ENCODE measurements at regions of chr1 and their contacts with region 1.

Region 1: GRCh38 chr1:114282751-114283403 is 129.2 kb upstream of the SYT6 start:
- DNase-seq: peak; percentile 67 to 91 (median 84)
- ATAC-seq: peak; percentile 99
- H3K4me3 ChIP-seq: no peak overlapping the region
- H3K4me3 Mint-ChIP-seq: no peak overlapping the region
- H3K27ac ChIP-seq: no peak overlapping the region
- H3K27ac Mint-ChIP-seq: no peak overlapping the region
- H3K4me1 ChIP-seq: no peaks in the 10 kb centered on the region
- H3K4me1 Mint-ChIP-seq: peaks cover 8% of the 10 kb centered on the region
- H3K27me3 ChIP-seq: no peaks in the 10 kb centered on the region
- H3K27me3 Mint-ChIP-seq: no peaks in the 10 kb centered on the region
- CTCF ChIP-seq: peak; percentile 80

Region 2: GRCh38 chr1:113140588-113141446 is 1142.1 kb before region 1 on chr1:
- CTCF ChIA-PET with region 1: no interaction called
- POLR2A ChIA-PET with region 1: no interaction called
- intact Hi-C with region 1: loop called in 1 of 2 experiments (anchors 10 kb)
- DNase-seq: peak; percentile 2 to 67 (median 43)
- ATAC-seq: peak; percentile 73
- H3K4me3 ChIP-seq: no peak overlapping the region
- H3K4me3 Mint-ChIP-seq: no peak overlapping the region
- H3K27ac ChIP-seq: no peak overlapping the region
- H3K27ac Mint-ChIP-seq: no peak overlapping the region
- H3K4me1 ChIP-seq: no peaks in the 10 kb centered on the region
- H3K4me1 Mint-ChIP-seq: peaks cover 8% of the 10 kb centered on the region
- H3K27me3 ChIP-seq: no peaks in the 10 kb centered on the region
- H3K27me3 Mint-ChIP-seq: no peaks in the 10 kb centered on the region
- CTCF ChIP-seq: peak; percentile 70

Region 3: GRCh38 chr1:113978863-113979702 is 303.8 kb before region 1 on chr1 and contains the start of gene OLFML3:
- CTCF ChIA-PET with region 1: interaction called, 16 read pairs
- POLR2A ChIA-PET with region 1: interaction called, 4 read pairs
- intact Hi-C with region 1: loop called (anchors 1 to 2 kb)
- DNase-seq: peak in 6 of 9 experiments; percentile 8 to 70 (median 48)
- ATAC-seq: peak; percentile 26
- H3K4me3 ChIP-seq: no peak within 1 kb of the TSS
- H3K4me3 Mint-ChIP-seq: no peak within 1 kb of the TSS
- H3K27ac ChIP-seq: no peak within 1 kb of the TSS
- H3K27ac Mint-ChIP-seq: peak within 1 kb of the TSS; percentile 55
- H3K4me1 ChIP-seq: peaks cover 18% of the 10 kb centered on the region
- H3K4me1 Mint-ChIP-seq: peaks cover 41% of the 10 kb centered on the region
- H3K27me3 ChIP-seq: no peaks in the 10 kb centered on the region
- H3K27me3 Mint-ChIP-seq: no peaks in the 10 kb centered on the region
- CTCF ChIP-seq: peak; percentile 56
- total RNA-seq, gene OLFML3: 0.49 to 0.67 TPM

Region 4: GRCh38 chr1:114093624-114094376 is 189.1 kb before region 1 on chr1:
- CTCF ChIA-PET with region 1: interaction called, 3 read pairs
- POLR2A ChIA-PET with region 1: no interaction called
- intact Hi-C with region 1: loop called (anchors 2 to 5 kb)
- DNase-seq: peak in 2 of 9 experiments; percentile 34 to 35
- ATAC-seq: no peak
- H3K4me3 ChIP-seq: no peak overlapping the region
- H3K4me3 Mint-ChIP-seq: no peak overlapping the region
- H3K27ac ChIP-seq: no peak overlapping the region
- H3K27ac Mint-ChIP-seq: no peak overlapping the region
- H3K4me1 ChIP-seq: no peaks in the 10 kb centered on the region
- H3K4me1 Mint-ChIP-seq: no peaks in the 10 kb centered on the region
- H3K27me3 ChIP-seq: no peaks in the 10 kb centered on the region
- H3K27me3 Mint-ChIP-seq: peaks cover 10% of the 10 kb centered on the region
- CTCF ChIP-seq: no peak

Region 5: DNA sequence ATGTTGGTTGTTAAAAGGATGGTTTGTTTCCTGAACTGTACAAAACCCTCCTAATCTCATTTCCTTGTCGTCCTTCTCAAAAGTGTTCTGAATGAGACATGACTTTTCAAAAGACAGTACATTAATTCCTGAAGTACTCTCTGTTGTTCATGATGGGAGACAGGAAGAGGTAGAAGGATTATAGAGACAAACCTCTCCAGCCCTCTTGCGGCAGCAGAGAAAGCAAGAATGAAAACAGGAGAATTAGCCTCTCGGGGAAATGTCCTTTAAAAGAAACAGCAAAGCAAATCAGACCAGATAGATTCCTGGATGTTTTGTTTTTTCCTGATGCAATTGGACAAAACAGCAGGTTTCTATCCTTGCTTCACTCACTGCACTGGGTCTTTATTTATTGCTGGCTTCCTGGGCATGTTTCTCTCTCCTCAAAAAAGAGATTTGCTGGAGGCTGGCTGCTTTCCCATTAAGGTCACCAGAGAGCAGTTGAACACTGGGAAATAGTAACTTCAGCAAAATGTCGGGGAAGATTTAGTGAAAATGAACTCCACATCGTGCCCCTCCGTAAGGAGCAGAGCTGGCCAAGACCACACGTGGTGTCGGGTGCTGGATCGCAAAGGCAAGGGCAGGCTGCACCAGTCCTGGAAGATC is 16.6 kb after region 1 on chr1:
- CTCF ChIA-PET with region 1: interaction called, 14 read pairs
- POLR2A ChIA-PET with region 1: no interaction called
- intact Hi-C with region 1: no loop called
- DNase-seq: no peak
- ATAC-seq: no peak
- H3K4me3 ChIP-seq: no peak overlapping the region
- H3K4me3 Mint-ChIP-seq: no peak overlapping the region
- H3K27ac ChIP-seq: no peak overlapping the region
- H3K27ac Mint-ChIP-seq: no peak overlapping the region
- H3K4me1 ChIP-seq: no peaks in the 10 kb centered on the region
- H3K4me1 Mint-ChIP-seq: peaks cover 9% of the 10 kb centered on the region
- H3K27me3 ChIP-seq: no peaks in the 10 kb centered on the region
- H3K27me3 Mint-ChIP-seq: no peaks in the 10 kb centered on the region
- CTCF ChIP-seq: no peak

Region 6: GRCh38 chr1:114610546-114611245 is 327.8 kb after region 1 on chr1:
- CTCF ChIA-PET with region 1: no interaction called
- POLR2A ChIA-PET with region 1: no interaction called
- intact Hi-C with region 1: no loop called
- DNase-seq: no peak
- ATAC-seq: no peak
- H3K4me3 ChIP-seq: no peak overlapping the region
- H3K4me3 Mint-ChIP-seq: no peak overlapping the region
- H3K27ac ChIP-seq: no peak overlapping the region
- H3K27ac Mint-ChIP-seq: no peak overlapping the region
- H3K4me1 ChIP-seq: no peaks in the 10 kb centered on the region
- H3K4me1 Mint-ChIP-seq: no peaks in the 10 kb centered on the region
- H3K27me3 ChIP-seq: no peaks in the 10 kb centered on the region
- H3K27me3 Mint-ChIP-seq: peaks cover 6% of the 10 kb centered on the region
- CTCF ChIP-seq: no peak

Measured in CD8-positive, alpha-beta T cell (primary cell).